Mammary epithelial cell (primary cell): ENCODE measurements at regions of chr11 and their contacts with region 1.

Region 1: DNA sequence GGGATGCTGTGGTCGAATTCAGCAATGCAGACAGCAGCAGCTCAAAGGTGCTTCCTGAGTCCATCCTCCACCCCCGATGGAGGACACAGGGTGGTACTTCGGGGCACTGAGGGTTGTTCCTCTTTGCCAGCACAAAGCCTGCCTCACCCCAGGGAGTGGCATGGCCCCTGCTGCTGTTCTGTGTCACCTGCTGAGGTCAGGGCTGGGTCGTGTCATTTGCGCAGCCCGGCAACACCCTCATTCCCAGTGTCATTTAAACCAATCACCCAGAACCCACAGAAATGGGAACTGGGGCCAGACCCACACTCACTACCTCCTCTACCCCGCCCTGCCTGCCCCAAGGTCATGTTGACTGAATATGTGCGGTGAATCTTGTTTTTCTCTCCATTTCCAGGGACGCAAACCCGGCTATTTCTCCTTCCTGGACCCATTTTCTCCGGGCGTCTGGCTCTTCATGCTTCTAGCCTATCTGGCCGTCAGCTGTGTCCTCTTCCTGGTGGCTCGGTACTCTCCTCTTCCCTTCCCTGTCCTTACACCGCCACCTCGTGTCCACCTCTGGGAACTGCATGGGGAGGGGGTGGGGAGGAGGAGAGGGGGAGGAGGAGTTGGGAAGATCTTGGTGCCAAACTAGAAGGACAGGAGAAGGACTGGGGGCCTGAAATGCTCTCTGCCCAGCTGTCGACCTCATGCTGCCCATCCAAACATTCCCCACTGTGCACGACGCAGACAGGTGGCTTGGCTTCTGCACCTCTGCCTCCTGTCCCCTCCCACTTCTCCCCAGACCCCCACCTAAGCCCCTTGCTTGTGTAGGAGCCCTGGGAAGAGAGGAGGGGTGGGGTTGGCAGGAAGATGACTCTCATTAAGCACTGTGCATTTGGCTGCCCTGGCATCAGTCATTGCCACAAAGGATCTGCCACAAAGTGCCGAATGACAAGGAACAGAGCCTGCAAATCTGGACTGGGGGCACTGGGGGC is 71.2 kb upstream of the TBCEL start:
- DNase-seq: peak; percentile 56
- H3K4me3 ChIP-seq: no peak overlapping the region
- H3K27ac ChIP-seq: no peak overlapping the region
- H3K4me1 ChIP-seq: peaks cover 8% of the 10 kb centered on the region
- H3K27me3 ChIP-seq: peaks cover 3% of the 10 kb centered on the region
- CTCF ChIP-seq: peak; percentile 64 to 89

Region 2: DNA sequence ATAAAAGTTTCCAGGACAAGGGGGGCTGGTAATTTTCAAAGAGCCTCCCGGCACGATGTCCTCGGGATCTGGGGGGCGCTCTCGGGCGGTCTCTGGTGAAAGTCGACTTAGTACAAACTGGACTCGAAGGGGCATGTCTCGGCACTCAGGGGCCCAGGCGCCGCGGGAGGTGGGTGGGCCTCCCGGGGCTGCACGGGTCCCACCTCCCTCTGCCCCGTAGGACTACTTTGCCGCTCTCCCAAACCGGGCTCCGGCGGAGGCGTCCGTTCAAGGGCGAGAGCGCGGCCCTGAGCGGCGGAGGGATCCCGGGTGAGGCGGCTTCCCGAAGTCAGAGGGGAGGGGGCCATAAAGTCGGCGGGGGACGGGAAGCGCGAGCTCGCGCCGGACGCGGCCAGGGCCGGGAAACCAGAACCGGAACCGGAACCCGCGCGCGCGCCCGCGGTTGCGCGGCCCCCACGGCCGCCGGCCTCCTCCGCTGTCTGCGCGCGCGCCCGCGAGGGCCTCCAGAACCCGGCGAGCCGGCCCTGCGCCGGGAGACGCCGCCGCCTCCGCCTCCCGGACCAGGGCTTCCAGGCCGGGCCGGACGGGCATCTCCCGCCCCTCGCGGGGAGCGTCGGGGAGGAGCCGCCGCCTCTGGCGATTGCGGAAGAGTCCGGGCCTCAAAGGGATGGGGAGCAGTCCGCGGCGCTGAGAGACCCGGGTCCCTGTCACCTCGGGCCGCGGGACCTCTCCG is 616.7 kb before region 1 on chr11 and contains the start of gene ARHGEF12:
- CTCF ChIA-PET with region 1: interaction called, 7 read pairs
- dilution Hi-C with region 1: no loop called
- in situ Hi-C with region 1: no loop called
- intact Hi-C with region 1: loop called (anchors 10 kb)
- DNase-seq: peak; percentile 93
- H3K4me3 ChIP-seq: peak within 1 kb of the TSS; percentile 63 to 97 (median 82)
- H3K27ac ChIP-seq: peak within 1 kb of the TSS; percentile 52
- H3K4me1 ChIP-seq: peaks cover 66% of the 10 kb centered on the region
- H3K27me3 ChIP-seq: no peaks in the 10 kb centered on the region
- CTCF ChIP-seq: peak in 1 of 2 donors; percentile 37
- total RNA-seq, gene ARHGEF12: 54.3 to 55.7 TPM

Region 3: DNA sequence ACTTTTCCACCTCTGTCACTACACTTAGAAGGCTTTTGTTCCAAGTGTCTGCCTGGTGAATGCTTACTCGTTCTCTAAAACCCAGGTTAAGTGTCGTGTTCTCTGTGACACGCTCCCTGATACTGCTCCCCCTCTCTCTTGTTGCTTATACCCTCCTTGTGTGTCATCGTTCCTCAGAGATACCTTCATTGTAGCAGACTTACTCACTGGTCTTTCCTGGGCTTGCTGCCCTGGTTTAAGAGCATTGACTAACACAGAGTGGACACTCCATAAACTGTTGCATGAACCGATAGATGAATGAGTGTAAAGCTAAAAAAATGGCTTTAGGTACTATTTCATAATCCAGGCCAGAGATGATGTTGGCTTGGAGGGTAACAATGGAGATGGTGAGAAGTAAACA is 269.9 kb before region 1 on chr11:
- CTCF ChIA-PET with region 1: interaction called, 8 read pairs
- dilution Hi-C with region 1: no loop called
- in situ Hi-C with region 1: no loop called
- intact Hi-C with region 1: loop called (anchors 1 kb)
- DNase-seq: peak; percentile 7
- H3K4me3 ChIP-seq: no peak overlapping the region
- H3K27ac ChIP-seq: no peak overlapping the region
- H3K4me1 ChIP-seq: no peaks in the 10 kb centered on the region
- H3K27me3 ChIP-seq: no peaks in the 10 kb centered on the region
- CTCF ChIP-seq: no peak

Region 4: GRCh38 chr11:121112498-121113455 is 160.0 kb after region 1 on chr11:
- CTCF ChIA-PET with region 1: no interaction called
- dilution Hi-C with region 1: no loop called
- in situ Hi-C with region 1: no loop called
- intact Hi-C with region 1: loop called (anchors 2 kb)
- DNase-seq: peak; percentile 56
- H3K4me3 ChIP-seq: no peak overlapping the region
- H3K27ac ChIP-seq: no peak overlapping the region
- H3K4me1 ChIP-seq: no peaks in the 10 kb centered on the region
- H3K27me3 ChIP-seq: no peaks in the 10 kb centered on the region
- CTCF ChIP-seq: peak; percentile 38 to 57